ENCODE measurements at regions of chr9 and their contacts with region 1.

Region 1: DNA sequence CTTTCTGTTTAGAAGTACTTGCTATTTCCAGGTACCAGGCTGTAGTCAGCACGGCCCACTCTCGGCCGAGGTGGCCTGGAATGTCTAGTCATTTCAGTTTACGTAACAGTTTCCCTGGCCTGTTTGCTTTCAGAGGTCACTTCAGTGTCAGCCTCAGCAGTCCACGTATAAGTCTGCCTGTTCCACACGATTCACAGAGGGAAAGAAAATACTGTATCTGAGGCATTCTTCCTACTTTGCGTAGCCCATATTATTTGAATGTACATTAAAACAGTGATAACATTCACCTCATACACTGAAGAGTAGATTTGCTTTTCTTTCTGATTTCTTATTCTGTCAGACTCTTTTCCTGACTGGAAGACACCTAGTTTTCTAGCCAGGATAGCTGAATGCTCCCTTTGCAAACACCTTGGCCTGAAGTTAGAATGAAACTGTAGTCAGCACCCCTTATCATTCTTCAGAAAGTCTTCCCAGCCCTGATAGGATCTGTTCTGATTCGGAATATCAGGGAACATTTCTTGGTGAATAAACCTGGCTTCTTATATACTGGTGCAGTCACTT is 140.9 kb downstream of the AOPEP start:
- DNase-seq: peak; percentile 91
- ATAC-seq: peak; percentile 49
- H3K4me3 ChIP-seq: no peak overlapping the region
- H3K27ac ChIP-seq: peak overlapping the region; percentile 59
- H3K4me1 ChIP-seq: peaks cover 19% of the 10 kb centered on the region
- H3K27me3 ChIP-seq: no peaks in the 10 kb centered on the region
- CTCF ChIP-seq: no peak
- POLR2A ChIP-seq: peak; percentile 25; the same call in 1 of the 2 replicates
- RAD21 ChIP-seq: peak; percentile 19

Region 2: GRCh38 chr9:94443032-94443722 is 424.2 kb before region 1 on chr9:
- CTCF ChIA-PET with region 1: no interaction called
- POLR2A ChIA-PET with region 1: no interaction called
- dilution Hi-C with region 1: no loop called
- in situ Hi-C with region 1: no loop called
- intact Hi-C with region 1: no loop called
- DNase-seq: no peak
- ATAC-seq: no peak
- H3K4me3 ChIP-seq: no peak overlapping the region
- H3K27ac ChIP-seq: no peak overlapping the region
- H3K4me1 ChIP-seq: peaks cover 2% of the 10 kb centered on the region; the same call in 1 of the 2 replicates
- H3K27me3 ChIP-seq: no peaks in the 10 kb centered on the region
- CTCF ChIP-seq: no peak
- POLR2A ChIP-seq: no peak
- RAD21 ChIP-seq: no peak

Region 3: DNA sequence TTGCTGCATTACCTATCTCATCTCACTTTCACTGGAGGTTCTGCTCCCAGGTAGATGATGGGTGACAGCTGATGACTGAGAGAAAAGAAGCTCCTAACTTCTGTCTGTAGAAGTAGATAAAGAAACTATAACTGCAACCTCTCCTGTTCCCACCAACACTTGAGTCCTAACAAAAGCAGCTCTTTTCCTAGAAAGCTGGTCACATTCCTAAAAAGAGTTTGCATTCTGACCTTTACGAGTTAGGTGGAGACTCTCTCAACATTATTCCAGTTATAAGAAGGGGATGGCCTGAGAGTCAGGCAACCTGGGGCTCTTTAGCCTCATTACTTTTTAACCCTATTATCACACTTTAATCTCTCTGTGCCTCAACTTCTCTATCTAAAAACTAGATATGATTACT is 321.4 kb before region 1 on chr9:
- CTCF ChIA-PET with region 1: no interaction called
- POLR2A ChIA-PET with region 1: no interaction called
- dilution Hi-C with region 1: no loop called
- in situ Hi-C with region 1: no loop called
- intact Hi-C with region 1: no loop called
- DNase-seq: no peak
- ATAC-seq: no peak
- H3K4me3 ChIP-seq: no peak overlapping the region
- H3K27ac ChIP-seq: no peak overlapping the region
- H3K4me1 ChIP-seq: no peaks in the 10 kb centered on the region
- H3K27me3 ChIP-seq: no peaks in the 10 kb centered on the region
- CTCF ChIP-seq: no peak
- POLR2A ChIP-seq: no peak
- RAD21 ChIP-seq: no peak

Region 4: GRCh38 chr9:94900222-94901018 is 33.1 kb after region 1 on chr9:
- CTCF ChIA-PET with region 1: no interaction called
- POLR2A ChIA-PET with region 1: interaction called, 5 read pairs
- dilution Hi-C with region 1: no loop called
- in situ Hi-C with region 1: no loop called
- intact Hi-C with region 1: loop called (anchors 5 kb)
- DNase-seq: peak; percentile 97
- ATAC-seq: peak; percentile 75
- H3K4me3 ChIP-seq: peak overlapping the region; percentile 27; the same call in 1 of the 2 replicates
- H3K27ac ChIP-seq: peak overlapping the region; percentile 99
- H3K4me1 ChIP-seq: peaks cover 21% of the 10 kb centered on the region
- H3K27me3 ChIP-seq: no peaks in the 10 kb centered on the region
- CTCF ChIP-seq: no peak
- POLR2A ChIP-seq: 0 out of 2 replicates have a peak, but pooled peaks have one; percentile 43
- RAD21 ChIP-seq: peak; percentile 29; the same call in 1 of the 2 replicates

Measured in IMR-90 (cell line).